Lower leg skin (tissue), 4 donors: ENCODE measurements at regions of chr2 and their contacts with region 1.

Region 1: DNA sequence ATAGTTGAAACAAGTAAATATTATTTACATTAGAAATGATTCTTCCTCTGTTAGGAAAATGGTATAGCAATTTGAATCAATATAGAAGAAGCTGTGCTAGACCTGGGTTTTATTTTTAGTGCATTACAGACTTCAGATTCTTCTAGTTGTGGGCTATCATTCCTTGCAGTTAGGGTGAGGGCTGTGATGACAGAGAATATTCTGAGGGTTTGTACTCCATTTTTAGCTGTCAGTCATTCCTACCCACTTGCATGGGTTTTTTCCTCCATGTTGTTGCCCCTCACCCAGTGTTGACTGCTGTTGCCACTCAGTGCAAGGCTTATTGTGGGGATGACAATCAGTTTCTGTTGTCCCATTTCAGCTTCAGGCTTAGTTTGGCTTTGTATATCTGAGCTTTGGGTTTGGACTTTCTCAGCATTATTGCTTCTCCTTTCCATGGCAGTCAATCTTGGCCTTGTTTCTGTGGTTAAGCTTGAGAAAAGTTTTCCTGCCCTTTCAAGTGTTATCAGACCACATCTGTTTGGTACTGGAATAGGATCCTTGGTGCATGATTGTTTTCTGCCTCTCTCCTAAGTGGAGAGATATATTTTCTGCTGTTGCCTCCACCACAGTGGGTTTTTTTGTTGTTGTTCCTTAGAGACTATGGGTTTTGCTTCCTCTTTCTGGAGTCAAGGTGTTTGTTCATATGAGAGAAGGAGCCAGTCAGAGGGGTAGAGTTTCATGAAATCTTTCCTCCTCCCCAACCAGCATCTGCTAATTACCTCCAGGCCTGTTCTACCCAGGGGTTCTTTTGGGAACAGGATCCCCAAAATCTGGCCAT is 312.7 kb upstream of the CWC22 start:
- DNase-seq: no peak
- H3K4me3 ChIP-seq: no peak overlapping the region
- CTCF ChIP-seq: no peak
- POLR2A ChIP-seq: no peak

Region 2: DNA sequence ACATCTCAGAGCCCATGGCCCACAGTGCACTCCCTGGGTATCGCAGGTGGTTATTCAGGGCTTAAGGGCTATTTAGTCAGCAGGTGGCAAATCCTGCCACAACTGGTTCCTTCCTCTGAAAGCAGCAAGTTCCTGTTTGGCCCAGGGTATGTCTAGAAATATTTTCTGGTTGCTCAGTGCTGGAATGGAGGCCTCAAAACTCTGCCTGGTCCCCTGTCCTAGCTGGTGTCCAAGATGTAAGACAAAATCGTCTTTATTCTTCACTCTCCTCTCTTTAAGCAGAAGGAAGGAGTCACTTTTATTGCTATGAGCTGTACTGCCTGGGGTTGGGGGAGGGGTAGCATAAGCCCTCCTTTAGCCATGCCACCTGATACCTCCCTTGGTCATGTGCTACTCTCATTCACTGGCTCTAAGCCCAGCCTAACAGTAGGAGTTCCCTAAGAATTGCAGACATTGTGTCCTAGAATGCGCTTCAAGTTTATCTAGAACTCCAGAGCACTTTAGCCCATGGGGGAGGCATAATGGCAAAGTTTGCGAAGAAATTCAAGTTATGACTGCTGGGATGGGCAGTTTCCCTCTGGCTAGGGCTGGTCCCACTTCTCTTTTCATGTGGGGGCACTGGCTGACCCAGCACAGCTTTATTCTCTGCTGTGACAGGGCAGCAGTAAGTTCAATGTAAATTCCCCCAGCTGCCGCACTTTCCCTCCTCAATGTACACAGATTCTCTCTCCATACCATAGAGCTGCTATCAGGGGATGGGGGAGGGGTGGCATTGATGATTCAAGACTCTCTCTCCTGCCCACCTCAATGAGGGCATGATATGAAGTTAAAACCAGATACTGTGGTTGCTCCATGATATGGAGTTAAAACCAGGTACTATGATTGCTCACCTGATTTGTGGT is 285.6 kb before region 1 on chr2:
- intact Hi-C with region 1: no loop called
- DNase-seq: no peak
- H3K4me3 ChIP-seq: no peak overlapping the region
- CTCF ChIP-seq: no peak
- POLR2A ChIP-seq: no peak

Region 3: GRCh38 chr2:180255981-180256380 is 63.8 kb before region 1 on chr2:
- intact Hi-C with region 1: loop called (anchors 1 kb)
- DNase-seq: no peak
- H3K4me3 ChIP-seq: no peak overlapping the region
- CTCF ChIP-seq: no peak
- POLR2A ChIP-seq: no peak